ENCODE measurements at regions of chr1 and their contacts with region 1.

Region 1: DNA sequence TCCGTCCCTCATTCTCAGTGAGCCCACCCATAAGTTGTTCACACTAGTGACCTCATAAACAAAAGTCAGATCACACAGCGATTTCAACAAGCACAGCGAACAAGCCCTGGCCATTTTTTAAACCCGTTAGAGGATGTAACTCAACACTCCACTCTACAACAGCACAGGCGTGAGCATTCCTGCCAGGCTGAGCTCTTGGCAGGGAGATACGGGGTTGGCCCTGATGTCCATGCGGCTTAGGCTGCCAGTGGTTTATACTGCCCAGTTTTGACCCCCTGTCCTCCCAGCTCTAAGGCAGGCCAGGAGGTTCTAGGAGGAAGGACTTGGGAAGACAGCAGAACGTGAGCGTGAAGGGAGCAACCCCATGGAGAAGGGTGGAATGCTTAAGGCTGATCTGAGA is 35.0 kb downstream of the PARP1 start:
- DNase-seq: no peak
- ATAC-seq: no peak
- H3K4me3 ChIP-seq: no peak overlapping the region
- H3K27ac ChIP-seq: no peak overlapping the region
- H3K4me1 ChIP-seq: no peaks in the 10 kb centered on the region
- H3K27me3 ChIP-seq: no peaks in the 10 kb centered on the region
- CTCF ChIP-seq: no peak

Region 2: DNA sequence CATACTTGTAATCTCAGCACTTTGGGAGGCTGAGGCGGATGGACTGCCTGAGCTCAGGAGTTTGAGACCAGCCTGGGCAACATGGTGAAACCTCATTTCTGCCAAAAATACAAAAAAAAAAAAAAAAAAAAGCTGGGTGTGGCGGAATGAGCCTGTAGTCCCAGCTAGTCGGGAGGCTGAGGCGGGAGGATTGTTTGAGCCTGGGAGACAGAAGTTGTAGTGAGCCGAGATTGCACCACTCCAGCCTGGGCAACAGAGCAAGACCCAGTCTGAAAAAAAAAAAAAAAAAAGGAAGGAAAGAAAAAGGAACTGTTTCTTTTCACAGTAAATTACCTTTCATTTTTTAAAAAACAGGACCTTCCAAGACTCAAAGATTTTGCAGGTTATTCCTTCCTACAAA is 93.4 kb before region 1 on chr1:
- CTCF ChIA-PET with region 1: no interaction called
- POLR2A ChIA-PET with region 1: interaction called, 11 read pairs
- intact Hi-C with region 1: no loop called
- DNase-seq: no peak
- ATAC-seq: no peak
- H3K4me3 ChIP-seq: no peak overlapping the region
- H3K27ac ChIP-seq: no peak overlapping the region
- H3K4me1 ChIP-seq: peaks cover 12% of the 10 kb centered on the region
- H3K27me3 ChIP-seq: no peaks in the 10 kb centered on the region
- CTCF ChIP-seq: no peak